Mammary epithelial cell (primary cell): ENCODE measurements at regions of chr1 and their contacts with region 1.

Region 1: DNA sequence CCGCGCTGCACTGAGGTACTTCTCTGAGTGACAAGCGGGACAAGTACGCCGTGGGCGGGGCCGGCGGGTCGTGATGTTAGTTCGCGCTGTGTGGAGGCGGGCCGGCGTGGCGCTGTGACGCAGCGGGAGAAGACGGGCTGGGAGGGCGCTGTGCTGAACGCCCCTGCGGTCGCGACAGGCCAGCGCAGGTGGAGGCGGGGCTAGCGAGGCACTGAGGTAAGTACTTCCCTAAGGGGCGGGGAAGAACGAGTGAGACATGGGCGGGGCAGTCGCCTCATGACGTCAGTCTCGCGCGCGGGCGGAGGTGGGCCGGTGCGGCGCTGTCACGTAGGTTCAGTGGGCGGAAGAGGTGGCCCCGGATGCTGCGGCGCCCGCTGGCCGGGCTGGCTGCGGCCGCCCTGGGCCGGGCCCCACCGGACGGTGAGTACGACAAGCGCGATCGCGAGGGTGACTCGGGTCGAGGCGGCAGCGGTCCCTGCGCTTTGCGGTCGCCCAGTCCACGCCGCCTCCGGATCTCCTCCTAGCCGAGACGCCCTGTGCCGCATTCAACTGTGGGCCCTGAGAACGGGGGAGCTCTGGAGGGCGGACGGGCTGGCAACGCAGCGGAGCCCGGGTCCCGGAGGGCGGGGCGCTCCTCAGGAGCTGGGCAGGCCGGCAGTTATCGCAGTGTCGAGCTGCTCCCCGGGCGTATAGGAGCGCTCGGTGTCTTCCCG is at the start of gene GUK1:
- DNase-seq: peak; percentile 100
- H3K4me3 ChIP-seq: peak within 1 kb of the TSS; percentile 93 to 96 (median 96)
- H3K27ac ChIP-seq: peak within 1 kb of the TSS; percentile 84
- H3K4me1 ChIP-seq: peaks cover 30% of the 10 kb centered on the region
- H3K27me3 ChIP-seq: no peaks in the 10 kb centered on the region
- CTCF ChIP-seq: no peak
- total RNA-seq, gene GUK1: 229 to 242 TPM

Region 2: DNA sequence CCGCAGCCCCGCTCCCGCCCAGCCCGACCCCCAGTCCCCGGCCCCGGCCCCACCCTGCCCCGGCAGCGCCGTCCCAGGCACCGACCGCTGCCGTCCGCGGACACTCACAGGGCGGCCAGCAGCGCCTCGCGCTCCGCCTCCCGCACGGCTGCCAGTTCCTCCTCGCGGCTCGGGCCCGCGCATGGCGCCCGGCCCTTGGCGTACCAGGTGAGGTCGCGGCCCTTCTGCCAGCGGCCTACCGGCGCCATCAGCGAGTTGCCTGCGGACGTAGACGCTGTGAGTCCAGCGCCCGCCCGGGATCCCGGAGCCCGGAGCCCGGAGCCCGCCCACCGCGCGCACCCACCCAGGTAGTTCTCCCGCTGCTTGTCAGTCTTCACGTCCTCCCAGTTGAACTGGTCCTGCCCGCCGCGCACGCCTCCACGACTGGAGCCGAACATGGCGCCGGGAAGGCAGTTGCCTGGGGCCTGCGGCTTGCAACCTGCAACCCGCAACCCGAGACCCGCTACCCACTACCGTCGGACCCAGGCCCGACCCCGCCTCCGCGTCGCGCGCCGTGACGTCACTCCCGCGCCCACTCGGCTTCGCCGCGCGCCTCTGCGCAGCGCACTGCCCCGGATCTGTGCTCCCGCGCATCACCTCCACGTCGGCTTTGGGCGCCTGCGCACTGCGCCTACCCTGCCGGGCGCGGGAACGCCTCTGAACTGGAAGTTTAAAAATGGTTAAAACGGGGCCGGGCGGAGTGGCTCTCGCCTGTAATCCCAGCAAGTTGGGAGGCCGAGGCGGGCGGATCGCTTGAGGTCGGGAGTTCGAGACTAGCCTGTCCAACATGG is 37.1 kb before region 1 on chr1 and contains the start of gene C1orf35:
- CTCF ChIA-PET with region 1: no interaction called
- dilution Hi-C with region 1: no loop called
- in situ Hi-C with region 1: no loop called
- intact Hi-C with region 1: loop called (anchors 5 kb)
- DNase-seq: peak; percentile 88
- H3K4me3 ChIP-seq: peak within 1 kb of the TSS; percentile 66 to 96 (median 82)
- H3K27ac ChIP-seq: peak within 1 kb of the TSS; percentile 54
- H3K4me1 ChIP-seq: peaks cover 11% of the 10 kb centered on the region
- H3K27me3 ChIP-seq: no peaks in the 10 kb centered on the region
- CTCF ChIP-seq: no peak
- total RNA-seq, gene C1orf35: 5.7 to 19.6 TPM

Region 3: DNA sequence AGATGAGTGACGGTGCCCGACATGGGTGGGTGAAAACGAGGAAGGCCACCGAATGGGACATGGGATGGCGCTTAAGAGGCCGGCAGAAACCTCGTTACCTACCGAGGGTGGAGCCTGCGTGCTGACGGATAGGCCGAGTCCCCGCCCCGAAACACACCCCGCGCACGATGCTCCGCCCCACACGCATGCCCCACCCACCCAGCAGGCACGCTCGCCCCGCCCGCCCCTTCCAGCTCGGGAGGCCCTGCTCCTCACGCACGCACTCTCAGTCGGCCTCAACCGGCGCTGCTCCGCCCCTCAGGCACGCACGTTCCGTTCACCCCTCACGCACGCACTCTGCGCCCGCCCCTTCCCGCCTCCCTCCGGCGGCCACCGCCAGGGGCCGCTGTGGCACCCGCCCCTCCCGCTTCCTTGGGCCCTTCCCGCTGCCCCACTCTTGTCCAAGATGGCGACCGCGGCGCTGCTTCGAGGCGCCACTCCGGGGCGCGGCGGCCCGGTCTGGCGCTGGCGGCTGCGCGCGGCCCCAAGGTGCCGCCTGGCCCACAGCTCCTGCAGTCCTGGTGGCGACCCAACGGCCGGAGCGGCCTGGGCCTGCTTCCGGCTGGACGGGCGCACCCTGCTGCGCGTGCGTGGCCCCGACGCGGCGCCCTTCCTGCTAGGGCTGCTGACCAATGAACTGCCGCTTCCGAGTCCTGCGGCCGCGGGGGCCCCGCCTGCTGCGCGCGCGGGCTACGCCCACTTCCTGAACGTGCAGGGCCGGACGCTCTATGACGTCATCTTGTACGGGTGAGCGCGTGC is 25.5 kb after region 1 on chr1 and contains the start of gene IBA57:
- CTCF ChIA-PET with region 1: no interaction called
- dilution Hi-C with region 1: no loop called
- in situ Hi-C with region 1: no loop called
- intact Hi-C with region 1: loop called (anchors 1 kb)
- DNase-seq: peak; percentile 98
- H3K4me3 ChIP-seq: peak within 1 kb of the TSS; percentile 59 to 73 (median 68)
- H3K27ac ChIP-seq: peak within 1 kb of the TSS; percentile 94
- H3K4me1 ChIP-seq: peaks cover 38% of the 10 kb centered on the region
- H3K27me3 ChIP-seq: no peaks in the 10 kb centered on the region
- CTCF ChIP-seq: peak; percentile 72 to 87
- total RNA-seq, gene IBA57: 7.0 to 8.0 TPM

Region 4: GRCh38 chr1:228315945-228316588 is 176.0 kb after region 1 on chr1:
- CTCF ChIA-PET with region 1: no interaction called
- dilution Hi-C with region 1: no loop called
- in situ Hi-C with region 1: no loop called
- intact Hi-C with region 1: no loop called
- DNase-seq: no peak
- H3K4me3 ChIP-seq: no peak overlapping the region
- H3K27ac ChIP-seq: no peak overlapping the region
- H3K4me1 ChIP-seq: no peaks in the 10 kb centered on the region
- H3K27me3 ChIP-seq: no peaks in the 10 kb centered on the region
- CTCF ChIP-seq: no peak

Region 5: GRCh38 chr1:228445843-228446650 is 305.9 kb after region 1 on chr1:
- CTCF ChIA-PET with region 1: no interaction called
- dilution Hi-C with region 1: loop called (anchors 5 kb)
- in situ Hi-C with region 1: loop called in 1 of 2 experiments (anchors 10 kb)
- intact Hi-C with region 1: no loop called
- DNase-seq: no peak
- H3K4me3 ChIP-seq: peak overlapping the region; percentile 0 to 35 (median 34)
- H3K27ac ChIP-seq: no peak overlapping the region
- H3K4me1 ChIP-seq: peaks cover 9% of the 10 kb centered on the region
- H3K27me3 ChIP-seq: peaks cover 3% of the 10 kb centered on the region
- CTCF ChIP-seq: no peak

Region 6: GRCh38 chr1:228457396-228458176 is 317.5 kb after region 1 on chr1:
- CTCF ChIA-PET with region 1: no interaction called
- dilution Hi-C with region 1: no loop called
- in situ Hi-C with region 1: loop called in 1 of 2 experiments (anchors 10 kb)
- intact Hi-C with region 1: no loop called
- DNase-seq: peak; percentile 98
- H3K4me3 ChIP-seq: peak overlapping the region; percentile 69 to 78 (median 76)
- H3K27ac ChIP-seq: peak overlapping the region; percentile 59
- H3K4me1 ChIP-seq: peaks cover 30% of the 10 kb centered on the region
- H3K27me3 ChIP-seq: no peaks in the 10 kb centered on the region
- CTCF ChIP-seq: peak in 1 of 2 donors; percentile 48

Region 7: DNA sequence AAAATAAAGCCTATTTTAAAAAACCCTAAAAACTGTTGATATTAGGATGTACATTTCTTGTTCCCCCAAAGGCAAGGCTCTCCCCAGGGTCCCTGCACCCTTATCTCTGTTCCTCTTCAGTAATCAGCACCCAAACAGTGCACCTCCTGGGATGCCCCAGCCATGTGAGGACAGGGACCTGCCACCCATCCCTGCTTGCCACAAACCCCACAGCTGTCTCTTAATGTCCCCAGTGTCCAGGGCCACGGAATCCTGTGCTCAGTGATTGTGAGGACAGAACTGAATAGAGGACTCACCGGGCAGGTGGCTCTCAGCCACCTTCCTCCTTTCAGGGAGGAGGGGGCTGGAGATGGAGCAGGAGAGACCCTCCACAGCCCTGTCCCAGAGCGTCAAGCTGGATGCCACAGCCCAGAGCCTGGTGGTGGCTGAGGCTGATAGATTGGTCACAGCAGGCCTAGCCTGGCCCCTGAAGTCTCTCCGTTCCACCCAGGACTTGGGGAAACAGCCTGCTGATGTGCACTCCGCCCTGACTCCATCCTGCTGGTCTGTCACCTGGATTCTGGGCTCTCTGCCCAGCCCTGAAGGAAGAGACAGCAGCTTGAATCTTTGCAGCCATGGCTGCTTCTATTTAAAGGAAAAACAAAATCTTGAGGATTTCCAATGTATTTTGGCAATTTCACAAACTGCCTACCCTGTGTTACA is 370.2 kb after region 1 on chr1:
- CTCF ChIA-PET with region 1: no interaction called
- dilution Hi-C with region 1: loop called (anchors 5 kb)
- in situ Hi-C with region 1: no loop called
- intact Hi-C with region 1: no loop called
- DNase-seq: no peak
- H3K4me3 ChIP-seq: no peak overlapping the region
- H3K27ac ChIP-seq: no peak overlapping the region
- H3K4me1 ChIP-seq: no peaks in the 10 kb centered on the region
- H3K27me3 ChIP-seq: no peaks in the 10 kb centered on the region
- CTCF ChIP-seq: no peak